Activated CD4-positive, alpha-beta T cell treated with anti-CD3 and anti-CD28 coated beads, Interleukin-2, amount 10 ng/mL, durations not matched to agents 24 days and 14 days (primary cell): ENCODE measurements at regions of chr12 and their contacts with region 1.

Region 1: GRCh38 chr12:68163560-68164081 is 4.1 kb upstream of the IFNG start:
- DNase-seq: no peak
- H3K4me3 Mint-ChIP-seq: peak overlapping the region; percentile 31
- H3K27ac Mint-ChIP-seq: peak overlapping the region; percentile 73
- H3K4me1 Mint-ChIP-seq: peaks cover 17% of the 10 kb centered on the region
- H3K27me3 Mint-ChIP-seq: peaks cover 2% of the 10 kb centered on the region

Region 2: GRCh38 chr12:67692966-67693365 is 470.7 kb before region 1 on chr12:
- intact Hi-C with region 1: no loop called
- DNase-seq: no peak
- H3K4me3 Mint-ChIP-seq: no peak overlapping the region
- H3K27ac Mint-ChIP-seq: no peak overlapping the region
- H3K4me1 Mint-ChIP-seq: peaks cover 32% of the 10 kb centered on the region
- H3K27me3 Mint-ChIP-seq: peaks cover 44% of the 10 kb centered on the region

Region 3: GRCh38 chr12:68148258-68148951 is 15.2 kb before region 1 on chr12:
- intact Hi-C with region 1: no loop called
- DNase-seq: no peak
- H3K4me3 Mint-ChIP-seq: no peak overlapping the region
- H3K27ac Mint-ChIP-seq: no peak overlapping the region
- H3K4me1 Mint-ChIP-seq: peaks cover 12% of the 10 kb centered on the region
- H3K27me3 Mint-ChIP-seq: no peaks in the 10 kb centered on the region

Region 4: GRCh38 chr12:68175557-68176061 is 12.0 kb after region 1 on chr12:
- intact Hi-C with region 1: loop called (anchors 1 kb)
- DNase-seq: peak; percentile 92
- H3K4me3 Mint-ChIP-seq: peak overlapping the region; percentile 68
- H3K27ac Mint-ChIP-seq: peak overlapping the region; percentile 85
- H3K4me1 Mint-ChIP-seq: peaks cover 53% of the 10 kb centered on the region
- H3K27me3 Mint-ChIP-seq: no peaks in the 10 kb centered on the region

Region 5: GRCh38 chr12:68180792-68181744 is 17.4 kb after region 1 on chr12:
- intact Hi-C with region 1: loop called (anchors 2 kb)
- DNase-seq: peak; percentile 89
- H3K4me3 Mint-ChIP-seq: peak overlapping the region; percentile 37
- H3K27ac Mint-ChIP-seq: peak overlapping the region; percentile 79
- H3K4me1 Mint-ChIP-seq: peaks cover 47% of the 10 kb centered on the region
- H3K27me3 Mint-ChIP-seq: no peaks in the 10 kb centered on the region